ENCODE measurements at regions of chr12 and their contacts with region 1.

Region 1: GRCh38 chr12:103571286-103571685 is 15.8 kb upstream of the STAB2 start:
- DNase-seq: peak in 1 of 2 experiments; percentile 73
- H3K4me3 ChIP-seq: peak overlapping the region; percentile 6 to 46 (median 14); a peak in 5 of 8 replicates
- H3K27ac ChIP-seq: no peak overlapping the region
- H3K4me1 ChIP-seq: peaks cover 0 to 6% (median 4%) of the 10 kb centered on the region in 4 experiments; a peak in 3 of 7 replicates
- H3K27me3 ChIP-seq: no peaks in the 10 kb centered on the region; a peak in 1 of 7 replicates
- CTCF ChIP-seq: peak in 1 of 3 experiments; percentile 17; a peak in 1 of 4 replicates
- EP300 ChIP-seq: no peak
- POLR2A ChIP-seq: no peak
- RAD21 ChIP-seq: peak in 1 of 2 experiments; percentile 11; a peak in 1 of 4 replicates

Region 2: GRCh38 chr12:103560604-103561573 is 10.4 kb before region 1 on chr12:
- CTCF ChIA-PET with region 1: interaction called, 16 read pairs
- POLR2A ChIA-PET with region 1: no interaction called
- DNase-seq: no peak
- H3K4me3 ChIP-seq: no peak overlapping the region
- H3K27ac ChIP-seq: no peak overlapping the region
- H3K4me1 ChIP-seq: no peaks in the 10 kb centered on the region
- H3K27me3 ChIP-seq: no peaks in the 10 kb centered on the region
- CTCF ChIP-seq: no peak
- EP300 ChIP-seq: no peak
- POLR2A ChIP-seq: no peak
- RAD21 ChIP-seq: no peak

Region 3: DNA sequence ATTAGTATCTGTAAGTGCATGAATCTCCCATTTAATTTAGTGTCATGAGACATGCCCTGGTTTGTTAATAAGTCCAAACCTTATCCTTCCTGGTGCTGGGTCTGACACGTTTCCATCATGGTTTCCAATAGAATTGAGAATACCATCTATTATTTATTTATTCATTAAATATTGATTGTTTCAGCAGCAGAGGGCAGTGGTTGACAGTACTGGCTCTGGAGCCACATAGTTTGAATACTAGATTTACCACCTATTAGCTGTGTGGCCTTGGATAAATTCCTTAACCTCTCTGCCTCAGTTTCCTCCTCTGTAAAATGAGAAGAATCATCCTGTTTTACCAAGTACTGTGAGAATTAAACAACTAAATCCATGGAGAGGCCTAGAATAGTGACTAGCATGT is 14.8 kb after region 1 on chr12:
- CTCF ChIA-PET with region 1: interaction called, 12 read pairs
- POLR2A ChIA-PET with region 1: no interaction called
- DNase-seq: no peak
- H3K4me3 ChIP-seq: no peak overlapping the region
- H3K27ac ChIP-seq: no peak overlapping the region
- H3K4me1 ChIP-seq: no peaks in the 10 kb centered on the region
- H3K27me3 ChIP-seq: no peaks in the 10 kb centered on the region
- CTCF ChIP-seq: no peak
- EP300 ChIP-seq: no peak
- POLR2A ChIP-seq: no peak
- RAD21 ChIP-seq: no peak; a peak in 1 of 4 replicates

Region 4: DNA sequence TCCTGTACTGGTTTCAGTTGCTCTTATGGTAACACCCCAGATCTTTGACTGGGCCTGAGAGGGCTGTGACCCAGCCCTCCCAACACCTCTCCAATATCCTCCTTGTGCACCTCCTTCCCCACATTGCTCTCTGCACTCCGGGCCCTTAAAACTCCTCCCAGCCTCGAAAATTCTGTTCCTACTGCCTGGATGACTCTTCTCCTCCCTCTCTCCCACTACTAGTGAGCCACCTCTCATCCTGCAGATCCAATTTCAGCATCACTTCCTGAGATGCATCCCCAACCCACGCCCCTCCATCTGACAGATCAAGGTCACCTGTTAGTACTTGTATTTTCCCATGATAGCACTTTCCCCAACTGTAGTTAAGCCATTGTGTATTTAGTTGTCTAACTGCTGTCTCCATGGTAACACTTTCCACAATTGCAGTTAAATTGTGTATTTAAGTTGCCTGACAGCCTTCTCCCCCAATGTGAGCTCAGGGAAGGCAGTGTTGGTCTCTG is 281.3 kb after region 1 on chr12:
- CTCF ChIA-PET with region 1: no interaction called
- POLR2A ChIA-PET with region 1: no interaction called
- DNase-seq: no peak
- H3K4me3 ChIP-seq: no peak overlapping the region
- H3K27ac ChIP-seq: no peak overlapping the region
- H3K4me1 ChIP-seq: no peaks in the 10 kb centered on the region
- H3K27me3 ChIP-seq: no peaks in the 10 kb centered on the region
- CTCF ChIP-seq: no peak
- EP300 ChIP-seq: no peak
- POLR2A ChIP-seq: no peak
- RAD21 ChIP-seq: no peak